ENCODE measurements at regions of chr22 and their contacts with region 1.

Region 1: DNA sequence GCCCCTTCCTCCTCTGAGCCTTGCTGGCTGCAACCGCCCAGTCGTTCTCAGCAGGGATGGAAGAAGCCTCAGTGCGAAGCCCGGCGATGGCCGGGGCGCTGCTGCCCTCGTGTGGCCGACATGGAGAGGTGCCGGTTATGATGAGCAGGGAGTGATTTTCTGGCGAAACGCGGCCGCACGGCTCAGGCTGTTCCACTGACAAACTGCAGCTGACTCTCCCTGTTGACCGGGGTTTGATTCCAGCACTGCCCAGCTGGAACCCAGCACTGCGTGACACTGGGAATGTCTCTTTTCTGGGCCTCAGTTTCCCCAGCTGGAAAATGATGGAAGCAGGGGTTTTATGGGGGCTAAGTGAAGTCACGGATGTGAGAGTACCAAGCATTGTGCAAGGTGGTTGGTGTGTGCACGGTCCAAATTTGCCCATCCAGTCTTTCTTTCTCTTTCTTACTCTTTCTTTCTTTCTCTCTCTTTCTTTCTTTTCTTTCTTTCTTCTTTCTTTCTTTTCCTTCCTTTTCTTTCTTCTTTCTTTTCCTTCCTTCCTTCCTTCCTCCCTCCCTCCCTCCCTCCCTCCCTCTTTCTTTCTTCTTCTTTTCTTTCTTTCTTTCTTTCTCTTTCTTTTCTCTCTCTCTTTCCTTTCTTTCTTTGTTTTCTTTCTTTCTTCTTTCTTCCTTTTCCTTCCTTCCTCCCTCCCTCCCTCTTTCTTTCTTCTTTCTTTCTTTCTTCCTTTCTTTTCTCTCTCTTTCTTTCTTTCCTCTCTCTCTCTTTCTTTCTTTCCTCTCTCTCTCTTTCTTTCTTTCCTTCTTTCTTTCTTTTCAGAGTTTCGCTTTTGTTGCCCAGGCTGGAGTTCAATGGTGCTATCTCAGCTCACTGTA is 25.8 kb upstream of the MPPED1 start:
- DNase-seq: peak; percentile 81 to 85 (median 82)
- ATAC-seq: peak; percentile 82 to 94 (median 86)
- H3K4me3 ChIP-seq: no peak overlapping the region
- H3K27ac ChIP-seq: no peak overlapping the region
- H3K4me1 ChIP-seq: peaks cover 0 to 29% (median 13%) of the 10 kb centered on the region in 4 donors
- H3K27me3 ChIP-seq: no peaks in the 10 kb centered on the region
- CTCF ChIP-seq: peak; percentile 81 to 94 (median 90)
- POLR2A ChIP-seq: no peak

Region 2: GRCh38 chr22:43220625-43221380 is 165.2 kb before region 1 on chr22:
- intact Hi-C with region 1: no loop called
- DNase-seq: no peak
- ATAC-seq: no peak
- H3K4me3 ChIP-seq: no peak overlapping the region
- H3K27ac ChIP-seq: no peak overlapping the region
- H3K4me1 ChIP-seq: peaks cover 0 to 5% (median 0%) of the 10 kb centered on the region in 4 donors
- H3K27me3 ChIP-seq: no peaks in the 10 kb centered on the region
- CTCF ChIP-seq: no peak
- POLR2A ChIP-seq: no peak

Region 3: GRCh38 chr22:43230971-43231723 is 154.9 kb before region 1 on chr22:
- intact Hi-C with region 1: loop called (anchors 5 kb)
- DNase-seq: peak; percentile 66 to 72 (median 68)
- ATAC-seq: peak; percentile 33 to 46 (median 40)
- H3K4me3 ChIP-seq: no peak overlapping the region
- H3K27ac ChIP-seq: no peak overlapping the region
- H3K4me1 ChIP-seq: peaks cover 0 to 44% (median 23%) of the 10 kb centered on the region in 4 donors
- H3K27me3 ChIP-seq: no peaks in the 10 kb centered on the region
- CTCF ChIP-seq: peak; percentile 89 to 96 (median 92)
- POLR2A ChIP-seq: no peak

Region 4: GRCh38 chr22:43273902-43274484 is 112.0 kb before region 1 on chr22:
- intact Hi-C with region 1: loop called (anchors 5 kb)
- DNase-seq: peak in 1 of 3 donors; percentile 58
- ATAC-seq: peak; percentile 66 to 80 (median 75)
- H3K4me3 ChIP-seq: no peak overlapping the region
- H3K27ac ChIP-seq: no peak overlapping the region
- H3K4me1 ChIP-seq: peaks cover 0 to 10% (median 5%) of the 10 kb centered on the region in 4 donors
- H3K27me3 ChIP-seq: no peaks in the 10 kb centered on the region
- CTCF ChIP-seq: peak; percentile 65 to 81 (median 72)
- POLR2A ChIP-seq: no peak

Region 5: DNA sequence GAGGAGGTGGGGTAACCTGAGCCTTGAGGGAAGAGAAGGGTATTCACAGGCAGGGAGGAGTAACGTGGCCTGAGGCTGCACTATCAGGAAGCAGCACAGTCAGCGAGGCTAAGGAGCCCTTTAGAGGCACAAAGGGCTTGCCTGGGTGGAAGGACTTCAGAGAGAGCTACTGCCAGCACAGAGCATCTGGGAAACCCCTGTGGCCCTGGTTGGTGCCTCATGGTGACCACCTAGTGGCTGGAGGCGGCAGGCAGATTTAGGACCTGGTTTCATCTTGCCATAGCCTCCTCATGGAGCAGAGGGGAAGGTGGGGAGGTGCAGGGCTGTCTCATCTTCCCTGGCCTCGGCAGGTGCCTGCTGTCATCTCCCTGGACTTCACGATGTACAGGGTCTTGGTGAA is 90.3 kb after region 1 on chr22:
- intact Hi-C with region 1: loop called in 1 of 2 experiments (anchors 5 kb)
- DNase-seq: peak in 2 of 3 donors; percentile 47 to 58
- ATAC-seq: peak; percentile 19 to 38 (median 34)
- H3K4me3 ChIP-seq: no peak overlapping the region
- H3K27ac ChIP-seq: no peak overlapping the region
- H3K4me1 ChIP-seq: peaks cover 0 to 9% (median 0%) of the 10 kb centered on the region in 4 donors
- H3K27me3 ChIP-seq: no peaks in the 10 kb centered on the region
- CTCF ChIP-seq: peak; percentile 29 to 44 (median 30)
- POLR2A ChIP-seq: no peak

Region 6: GRCh38 chr22:43826142-43827002 is 440.4 kb after region 1 on chr22:
- intact Hi-C with region 1: loop called in 1 of 2 experiments (anchors 5 kb)
- DNase-seq: peak in 2 of 3 donors; percentile 51 to 61
- ATAC-seq: peak; percentile 37 to 53 (median 46)
- H3K4me3 ChIP-seq: no peak overlapping the region
- H3K27ac ChIP-seq: no peak overlapping the region
- H3K4me1 ChIP-seq: peaks cover 0 to 13% (median 6%) of the 10 kb centered on the region in 4 donors
- H3K27me3 ChIP-seq: no peaks in the 10 kb centered on the region
- CTCF ChIP-seq: peak; percentile 23 to 57 (median 49)
- POLR2A ChIP-seq: no peak